Mucosa of descending colon (tissue), 3 donors: ENCODE measurements at regions of chr16 and their contacts with region 1.

Region 1: GRCh38 chr16:86519649-86520316 is 9.5 kb downstream of the FOXF1 start:
- DNase-seq: peak; percentile 57 to 69 (median 67)
- ATAC-seq: peak; percentile 57
- H3K4me3 ChIP-seq: no peak overlapping the region
- H3K4me1 ChIP-seq: peaks cover 4% of the 10 kb centered on the region
- CTCF ChIP-seq: peak; percentile 78

Region 2: GRCh38 chr16:86072328-86073102 is 447.3 kb before region 1 on chr16:
- intact Hi-C with region 1: loop called (anchors 5 to 10 kb)
- DNase-seq: peak in 2 of 3 donors; percentile 72 to 82
- ATAC-seq: peak; percentile 60
- H3K4me3 ChIP-seq: no peak overlapping the region
- H3K4me1 ChIP-seq: no peaks in the 10 kb centered on the region
- CTCF ChIP-seq: peak; percentile 70

Region 3: DNA sequence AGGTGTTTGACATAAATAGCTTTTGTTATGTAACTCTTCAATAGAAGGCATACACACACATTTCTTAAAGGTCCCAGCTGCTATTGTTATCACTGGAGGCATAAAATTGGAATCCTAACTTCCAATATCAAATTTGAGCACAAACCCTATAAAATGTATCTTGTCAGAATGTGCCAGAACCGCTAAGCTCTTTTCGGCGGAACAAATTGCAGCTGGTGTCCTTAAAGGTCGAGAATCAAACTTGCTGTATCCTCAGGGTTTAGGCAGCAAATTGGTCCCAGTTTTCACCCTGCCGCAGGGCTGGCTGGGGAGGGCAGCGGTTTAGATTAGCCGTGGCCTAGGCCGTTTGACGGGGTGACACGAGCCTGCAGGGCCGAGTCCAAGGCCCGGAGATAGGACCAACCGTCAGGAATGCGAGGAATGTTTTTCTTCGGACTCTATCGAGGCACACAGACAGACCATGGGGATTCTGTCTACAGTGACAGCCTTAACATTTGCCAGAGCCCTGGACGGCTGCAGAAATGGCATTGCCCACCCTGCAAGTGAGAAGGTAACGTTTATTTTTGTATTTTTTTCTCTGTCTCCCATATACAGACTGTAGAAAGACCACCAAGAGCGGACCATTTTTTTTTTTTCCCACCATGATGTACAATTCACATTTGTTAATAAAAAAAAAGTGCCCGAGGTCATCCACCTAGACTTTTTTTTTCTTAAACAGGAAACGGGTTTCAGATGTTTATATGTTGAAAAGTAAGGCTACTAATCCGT is 323.7 kb before region 1 on chr16:
- intact Hi-C with region 1: loop called in 1 of 2 experiments (anchors 5 kb)
- DNase-seq: no peak
- ATAC-seq: no peak
- H3K4me3 ChIP-seq: no peak overlapping the region
- H3K4me1 ChIP-seq: peaks cover 3% of the 10 kb centered on the region
- CTCF ChIP-seq: no peak